ENCODE measurements at regions of chr1 and their contacts with region 1.

Region 1: DNA sequence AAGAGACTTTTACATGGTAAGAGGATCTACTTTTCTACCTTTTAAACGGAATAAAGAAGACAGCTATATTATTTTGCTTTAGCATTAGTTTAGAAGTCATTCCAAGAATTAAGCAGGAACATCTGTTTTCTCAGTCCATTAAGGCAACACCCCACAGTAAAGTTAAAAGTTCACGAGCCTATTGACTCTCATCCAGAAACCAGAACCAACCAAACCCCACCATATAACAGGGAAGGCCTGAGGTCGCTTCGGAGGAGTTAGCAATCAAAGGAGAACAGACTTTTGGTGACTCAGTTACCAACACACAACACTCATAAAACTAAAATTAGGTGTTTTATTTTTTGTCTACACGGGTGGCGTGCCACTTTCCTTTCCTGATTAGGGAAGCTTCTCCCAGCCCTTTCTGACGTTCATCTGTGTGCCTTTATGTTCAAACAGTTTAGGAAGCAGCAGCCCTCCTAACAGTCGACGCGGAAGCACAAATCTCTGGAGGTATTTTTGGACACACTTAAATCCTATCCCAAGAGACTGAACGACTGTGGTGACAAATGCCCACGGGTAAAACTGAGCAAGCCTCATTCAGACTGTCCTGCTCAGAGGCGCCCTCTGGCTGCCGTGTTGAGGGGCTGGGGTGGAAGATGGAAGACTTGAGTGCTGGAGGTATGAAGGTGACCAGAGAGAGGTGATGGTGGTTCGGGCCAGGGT is 8.6 kb upstream of the PLA2G2C start:
- DNase-seq: peak; percentile 90
- H3K4me3 ChIP-seq: no peak overlapping the region
- H3K27ac ChIP-seq: no peak overlapping the region
- H3K4me1 ChIP-seq: peaks cover 3 to 9% (median 6%) of the 10 kb centered on the region in 6 donors
- H3K27me3 ChIP-seq: peaks cover 0 to 43% (median 0%) of the 10 kb centered on the region in 7 donors
- CTCF ChIP-seq: peak; percentile 69 to 89 (median 83)
- POLR2A ChIP-seq: no peak

Region 2: GRCh38 chr1:19918057-19918456 is 276.9 kb before region 1 on chr1:
- intact Hi-C with region 1: loop called (anchors 2 kb)
- DNase-seq: peak; percentile 89
- H3K4me3 ChIP-seq: no peak overlapping the region
- H3K27ac ChIP-seq: no peak overlapping the region
- H3K4me1 ChIP-seq: peaks cover 0 to 20% (median 4%) of the 10 kb centered on the region in 6 donors
- H3K27me3 ChIP-seq: peaks cover 0 to 2% (median 0%) of the 10 kb centered on the region in 7 donors
- CTCF ChIP-seq: peak; percentile 75 to 93 (median 90)
- POLR2A ChIP-seq: no peak

Region 3: GRCh38 chr1:19974822-19975416 is 220.0 kb before region 1 on chr1:
- intact Hi-C with region 1: loop called (anchors 5 kb)
- DNase-seq: no peak
- H3K4me3 ChIP-seq: no peak overlapping the region
- H3K27ac ChIP-seq: no peak overlapping the region
- H3K4me1 ChIP-seq: peaks cover 0 to 7% (median 0%) of the 10 kb centered on the region in 6 donors
- H3K27me3 ChIP-seq: peaks cover 0 to 28% (median 0%) of the 10 kb centered on the region in 7 donors
- CTCF ChIP-seq: peak; percentile 37 to 76 (median 56)
- POLR2A ChIP-seq: no peak

Region 4: DNA sequence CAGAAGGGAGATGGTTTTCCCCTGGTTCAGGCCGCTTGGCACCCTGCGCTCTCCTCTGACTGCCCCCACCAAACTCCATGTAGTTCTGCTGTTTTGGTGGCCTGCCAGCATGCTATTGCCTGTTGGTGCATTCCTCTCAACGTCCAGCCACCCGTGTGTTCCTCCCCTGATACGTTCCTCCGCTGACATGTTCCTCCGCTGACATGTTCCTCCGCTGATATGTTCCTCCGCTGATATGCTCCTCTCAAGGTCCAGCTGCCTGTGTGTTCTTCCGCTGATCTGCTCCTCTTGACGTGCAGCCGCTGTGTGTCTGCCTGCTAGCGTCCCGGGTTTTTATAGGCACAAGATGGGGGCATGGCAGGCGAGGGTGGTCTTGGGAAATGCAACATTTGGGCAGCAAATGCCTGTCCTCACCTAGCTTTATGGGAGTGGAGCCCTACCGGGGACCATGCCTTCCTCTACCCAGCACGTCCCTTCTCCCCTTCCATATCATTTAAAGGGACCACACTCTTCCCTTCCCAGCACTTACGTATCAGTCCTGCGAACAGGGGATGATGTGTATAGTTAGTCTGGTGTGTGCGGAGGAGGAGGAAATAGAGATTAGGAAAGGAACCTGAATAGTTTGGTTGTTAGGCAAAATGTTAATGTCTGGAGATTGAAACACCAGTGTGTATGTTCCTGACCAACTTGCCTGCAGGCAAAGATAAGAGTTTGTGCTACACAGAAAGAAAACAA is 165.6 kb before region 1 on chr1:
- intact Hi-C with region 1: no loop called
- DNase-seq: no peak
- H3K4me3 ChIP-seq: no peak overlapping the region
- H3K27ac ChIP-seq: no peak overlapping the region
- H3K4me1 ChIP-seq: no peaks in the 10 kb centered on the region
- H3K27me3 ChIP-seq: peaks cover 0 to 36% (median 0%) of the 10 kb centered on the region in 7 donors
- CTCF ChIP-seq: no peak
- POLR2A ChIP-seq: no peak

Region 5: DNA sequence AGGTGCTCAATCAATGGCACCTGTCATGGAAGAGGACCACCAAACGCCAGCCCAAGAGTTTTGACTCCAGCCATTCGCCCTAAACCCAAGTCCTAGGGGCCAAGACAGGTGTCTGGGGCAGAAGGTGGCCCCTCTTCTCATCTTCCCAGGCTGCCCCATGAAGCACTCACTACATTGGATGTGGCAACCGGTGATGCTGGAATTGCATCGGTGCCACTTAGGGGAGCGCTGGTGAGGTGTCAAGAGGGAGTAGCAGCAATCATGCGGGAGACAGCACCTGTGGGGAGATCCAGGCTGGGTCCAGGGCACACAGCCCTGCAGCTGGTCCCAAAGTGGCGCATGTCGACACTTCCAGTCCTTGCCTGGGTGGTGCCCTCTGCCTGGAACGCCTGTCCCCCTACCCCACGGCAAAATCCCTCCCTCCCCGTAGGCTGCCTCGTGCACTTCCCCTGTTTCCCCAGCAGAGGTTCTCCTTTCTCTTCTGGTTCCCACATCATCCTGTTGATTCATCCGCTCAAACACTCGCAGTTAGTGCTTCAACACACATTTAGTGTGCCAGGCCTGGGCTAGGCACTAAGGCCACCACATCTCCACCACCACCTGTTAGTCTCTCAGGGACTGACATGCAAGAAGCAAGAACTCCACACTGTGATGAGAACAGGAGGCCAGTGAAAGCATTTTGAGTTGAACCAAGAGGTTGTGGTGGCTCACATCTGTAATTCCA is 94.1 kb before region 1 on chr1:
- intact Hi-C with region 1: loop called (anchors 5 kb)
- DNase-seq: no peak
- H3K4me3 ChIP-seq: no peak overlapping the region
- H3K27ac ChIP-seq: no peak overlapping the region
- H3K4me1 ChIP-seq: peaks cover 0 to 9% (median 3%) of the 10 kb centered on the region in 6 donors
- H3K27me3 ChIP-seq: peaks cover 0 to 5% (median 0%) of the 10 kb centered on the region in 7 donors
- CTCF ChIP-seq: peak; percentile 53 to 95 (median 85)
- POLR2A ChIP-seq: no peak

Measured in spleen (tissue), 13 donors.